ENCODE measurements at regions of chr5 and their contacts with region 1.

Region 1: GRCh38 chr5:76867827-76868693 is 18.2 kb downstream of the S100Z start:
- DNase-seq: peak; percentile 39
- ATAC-seq: peak; percentile 92
- H3K4me3 ChIP-seq: no peak overlapping the region
- H3K27ac ChIP-seq: no peak overlapping the region
- H3K4me1 ChIP-seq: no peaks in the 10 kb centered on the region; the same call in 1 of the 2 replicates
- H3K27me3 ChIP-seq: no peaks in the 10 kb centered on the region
- CTCF ChIP-seq: peak; percentile 80 to 93 (median 88); a peak in 5 of 6 replicates
- EP300 ChIP-seq: no peak
- POLR2A ChIP-seq: no peak
- RAD21 ChIP-seq: peak; percentile 92

Region 2: DNA sequence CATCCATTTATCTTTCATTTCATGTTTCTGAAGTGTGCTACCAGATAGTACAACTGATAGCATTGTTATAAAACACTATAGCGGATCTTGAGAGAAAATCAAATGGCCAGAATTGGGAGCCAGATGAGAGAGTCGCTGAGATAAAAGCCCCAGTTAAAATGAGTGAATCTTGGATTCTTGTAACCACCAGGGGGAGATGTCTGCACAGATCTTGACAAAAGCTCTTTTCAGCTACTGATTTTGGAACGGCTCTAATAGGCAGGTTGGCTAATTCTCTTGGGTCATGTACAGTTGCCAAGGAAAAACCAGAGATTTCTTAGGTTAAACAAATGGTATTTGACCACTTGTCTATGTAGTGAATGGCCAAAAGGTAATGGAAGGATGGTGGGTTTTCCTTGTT is 266.6 kb before region 1 on chr5:
- CTCF ChIA-PET with region 1: interaction called, 4 read pairs
- POLR2A ChIA-PET with region 1: no interaction called
- RAD21 ChIA-PET with region 1: interaction called, 3 read pairs
- SMC1A ChIA-PET with region 1: no interaction called
- in situ Hi-C with region 1: no loop called
- intact Hi-C with region 1: loop called (anchors 5 kb)
- DNase-seq: no peak
- ATAC-seq: peak; percentile 89
- H3K4me3 ChIP-seq: no peak overlapping the region
- H3K27ac ChIP-seq: no peak overlapping the region
- H3K4me1 ChIP-seq: no peaks in the 10 kb centered on the region
- H3K27me3 ChIP-seq: no peaks in the 10 kb centered on the region
- CTCF ChIP-seq: peak; percentile 58 to 72 (median 71); a peak in 5 of 6 replicates
- EP300 ChIP-seq: no peak
- POLR2A ChIP-seq: no peak
- RAD21 ChIP-seq: peak; percentile 94

Region 3: GRCh38 chr5:76838481-76839261 is 29.4 kb before region 1 on chr5:
- CTCF ChIA-PET with region 1: no interaction called
- POLR2A ChIA-PET with region 1: no interaction called
- RAD21 ChIA-PET with region 1: no interaction called
- SMC1A ChIA-PET with region 1: no interaction called
- in situ Hi-C with region 1: no loop called
- intact Hi-C with region 1: no loop called
- DNase-seq: no peak
- ATAC-seq: no peak
- H3K4me3 ChIP-seq: no peak overlapping the region
- H3K27ac ChIP-seq: no peak overlapping the region
- H3K4me1 ChIP-seq: no peaks in the 10 kb centered on the region
- H3K27me3 ChIP-seq: no peaks in the 10 kb centered on the region; a peak in 1 of 4 replicates
- CTCF ChIP-seq: no peak
- EP300 ChIP-seq: no peak
- POLR2A ChIP-seq: no peak
- RAD21 ChIP-seq: no peak

Region 4: GRCh38 chr5:77015938-77016569 is 148.0 kb after region 1 on chr5:
- CTCF ChIA-PET with region 1: interaction called, 39 read pairs
- POLR2A ChIA-PET with region 1: no interaction called
- RAD21 ChIA-PET with region 1: interaction called, 20 read pairs
- SMC1A ChIA-PET with region 1: interaction called, 31 read pairs
- in situ Hi-C with region 1: loop called (anchors 5 kb)
- intact Hi-C with region 1: loop called (anchors 1 kb)
- DNase-seq: no peak
- ATAC-seq: peak; percentile 57
- H3K4me3 ChIP-seq: no peak overlapping the region
- H3K27ac ChIP-seq: no peak overlapping the region
- H3K4me1 ChIP-seq: no peaks in the 10 kb centered on the region
- H3K27me3 ChIP-seq: no peaks in the 10 kb centered on the region; a peak in 1 of 4 replicates
- CTCF ChIP-seq: peak in 1 of 3 experiments; percentile 42; a peak in 3 of 6 replicates
- EP300 ChIP-seq: no peak
- POLR2A ChIP-seq: no peak
- RAD21 ChIP-seq: peak; percentile 64

Region 5: GRCh38 chr5:77076961-77077823 is 209.1 kb after region 1 on chr5:
- CTCF ChIA-PET with region 1: interaction called, 5 read pairs
- POLR2A ChIA-PET with region 1: no interaction called
- RAD21 ChIA-PET with region 1: interaction called, 19 read pairs
- SMC1A ChIA-PET with region 1: interaction called, 3 read pairs
- in situ Hi-C with region 1: loop called (anchors 5 kb)
- intact Hi-C with region 1: loop called (anchors 2 kb)
- DNase-seq: no peak
- ATAC-seq: peak; percentile 94
- H3K4me3 ChIP-seq: peak overlapping the region; percentile 5; the same call in 1 of the 2 replicates
- H3K27ac ChIP-seq: no peak overlapping the region
- H3K4me1 ChIP-seq: 0 out of 2 replicates have a peak, but pooled peaks cover 3% of the 10 kb centered on the region
- H3K27me3 ChIP-seq: no peaks in the 10 kb centered on the region
- CTCF ChIP-seq: peak; percentile 60 to 73 (median 66); a peak in 5 of 6 replicates
- EP300 ChIP-seq: no peak
- POLR2A ChIP-seq: no peak
- RAD21 ChIP-seq: peak; percentile 60

Region 6: GRCh38 chr5:77143998-77144836 is 276.2 kb after region 1 on chr5:
- CTCF ChIA-PET with region 1: interaction called, 3 read pairs
- POLR2A ChIA-PET with region 1: no interaction called
- RAD21 ChIA-PET with region 1: interaction called, 3 read pairs
- SMC1A ChIA-PET with region 1: interaction called, 4 read pairs
- in situ Hi-C with region 1: no loop called
- intact Hi-C with region 1: loop called (anchors 5 kb)
- DNase-seq: peak; percentile 13
- ATAC-seq: peak; percentile 92
- H3K4me3 ChIP-seq: no peak overlapping the region
- H3K27ac ChIP-seq: no peak overlapping the region
- H3K4me1 ChIP-seq: no peaks in the 10 kb centered on the region
- H3K27me3 ChIP-seq: no peaks in the 10 kb centered on the region
- CTCF ChIP-seq: peak; percentile 78 to 90 (median 84)
- EP300 ChIP-seq: no peak
- POLR2A ChIP-seq: no peak
- RAD21 ChIP-seq: peak; percentile 90

Region 7: DNA sequence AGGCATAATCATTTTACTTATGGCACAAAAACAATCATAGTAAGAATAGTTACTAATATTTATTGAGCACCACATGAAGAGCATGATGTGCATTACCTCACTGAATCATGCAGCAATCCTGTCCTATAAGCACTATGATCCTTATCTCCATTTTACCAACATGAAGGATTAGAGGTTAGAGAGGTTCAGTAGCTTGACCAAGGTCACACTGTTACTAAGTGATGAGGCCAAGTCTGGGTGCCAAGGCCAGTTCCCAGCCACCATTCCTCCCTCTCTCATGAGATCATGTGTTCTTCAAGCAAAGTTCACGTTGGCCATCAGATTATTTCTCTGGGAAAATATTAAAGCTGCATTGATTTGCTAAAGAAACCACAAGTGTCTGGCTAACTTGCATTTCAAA is 373.4 kb after region 1 on chr5:
- CTCF ChIA-PET with region 1: no interaction called
- POLR2A ChIA-PET with region 1: no interaction called
- RAD21 ChIA-PET with region 1: no interaction called
- SMC1A ChIA-PET with region 1: no interaction called
- in situ Hi-C with region 1: no loop called
- intact Hi-C with region 1: loop called (anchors 10 kb)
- DNase-seq: no peak
- ATAC-seq: no peak
- H3K4me3 ChIP-seq: no peak overlapping the region
- H3K27ac ChIP-seq: no peak overlapping the region
- H3K4me1 ChIP-seq: no peaks in the 10 kb centered on the region
- H3K27me3 ChIP-seq: 0 out of 4 replicates have a peak, but pooled peaks cover 0 to 2% of the 10 kb centered on the region in 2 experiments
- CTCF ChIP-seq: no peak
- EP300 ChIP-seq: no peak
- POLR2A ChIP-seq: no peak
- RAD21 ChIP-seq: no peak

Region 8: DNA sequence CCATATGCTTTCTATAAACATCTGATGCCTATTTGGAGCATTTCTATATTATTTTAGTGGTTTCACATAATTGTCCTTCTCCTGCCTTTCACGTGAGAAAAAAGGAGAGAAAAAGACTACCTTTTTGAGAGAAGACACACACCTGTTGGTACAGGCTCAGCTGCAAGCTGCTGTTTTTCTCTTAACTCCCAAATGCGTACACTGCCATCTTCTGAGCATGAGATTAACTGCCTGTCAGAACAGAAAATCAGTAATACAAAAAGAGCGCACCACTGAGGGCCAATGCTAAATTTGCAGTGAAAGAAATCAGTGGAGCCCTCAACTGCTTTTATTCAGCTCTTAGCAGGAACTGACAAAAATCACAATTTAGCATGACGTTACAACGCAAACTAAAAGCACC is 569.1 kb after region 1 on chr5:
- CTCF ChIA-PET with region 1: interaction called, 3 read pairs
- POLR2A ChIA-PET with region 1: no interaction called
- RAD21 ChIA-PET with region 1: no interaction called
- SMC1A ChIA-PET with region 1: no interaction called
- in situ Hi-C with region 1: no loop called
- intact Hi-C with region 1: loop called (anchors 10 kb)
- DNase-seq: no peak
- ATAC-seq: 0 out of 3 replicates have a peak, but pooled peaks have one; percentile 40
- H3K4me3 ChIP-seq: no peak overlapping the region
- H3K27ac ChIP-seq: no peak overlapping the region
- H3K4me1 ChIP-seq: no peaks in the 10 kb centered on the region
- H3K27me3 ChIP-seq: no peaks in the 10 kb centered on the region
- CTCF ChIP-seq: peak in 2 of 3 experiments; percentile 15 to 51; a peak in 2 of 6 replicates
- EP300 ChIP-seq: no peak
- POLR2A ChIP-seq: no peak
- RAD21 ChIP-seq: peak; percentile 63